B cell (primary cell): ENCODE measurements at regions of chr13 and their contacts with region 1.

Region 1: DNA sequence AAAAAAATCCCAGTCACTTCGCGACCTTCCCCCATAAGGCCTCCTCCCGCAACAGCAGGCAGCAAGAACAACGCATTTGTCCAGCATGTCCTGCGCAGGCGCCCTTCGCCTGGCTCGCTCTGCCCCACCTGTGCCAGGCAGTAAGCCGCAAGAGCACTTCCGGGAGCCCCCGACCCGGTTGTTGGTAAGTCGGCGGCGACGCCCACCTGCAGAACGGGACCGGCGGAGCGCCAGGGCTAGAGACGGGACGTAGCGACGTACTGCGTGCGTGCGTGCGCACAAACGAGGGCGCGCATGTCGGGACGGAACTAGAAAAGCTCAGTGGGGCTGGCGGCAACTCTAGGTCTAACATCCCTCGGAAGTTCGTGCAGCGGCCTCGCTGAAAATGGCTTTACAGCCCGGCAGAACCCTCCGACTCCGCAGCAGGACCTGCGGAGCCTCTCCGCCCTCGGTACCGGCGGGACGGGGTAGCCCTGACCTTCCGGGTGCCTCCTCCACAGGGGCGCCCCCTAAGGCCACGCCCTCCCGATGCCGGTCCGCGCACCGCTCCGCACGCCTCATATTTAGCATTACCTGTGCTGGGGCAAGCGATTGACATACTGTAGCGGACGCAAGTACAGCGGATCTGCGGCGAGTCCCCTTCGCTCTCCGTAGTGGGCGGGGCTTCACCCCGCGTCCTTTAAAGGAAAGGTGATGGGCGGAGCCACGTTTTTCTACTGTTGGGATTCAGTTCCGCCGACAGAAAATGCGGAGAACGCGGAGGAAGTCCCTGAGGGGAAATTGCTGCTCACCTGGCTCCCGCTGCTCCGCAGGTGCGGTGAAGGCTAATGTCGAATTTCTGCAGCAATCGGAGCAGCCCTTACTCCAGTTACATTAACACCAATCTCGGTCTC is at the start of gene MTIF3:
- DNase-seq: peak; percentile 99
- ATAC-seq: peak; percentile 75
- H3K4me3 ChIP-seq: peak within 1 kb of the TSS; percentile 71 to 94 (median 90)
- H3K4me3 Mint-ChIP-seq: peak within 1 kb of the TSS; percentile 94
- H3K27ac ChIP-seq: peak within 1 kb of the TSS; percentile 92 to 98
- H3K27ac Mint-ChIP-seq: peak within 1 kb of the TSS; percentile 98
- H3K4me1 ChIP-seq: peaks cover 55 to 58% of the 10 kb centered on the region in 2 donors
- H3K4me1 Mint-ChIP-seq: peaks cover 57% of the 10 kb centered on the region
- H3K27me3 ChIP-seq: no peaks in the 10 kb centered on the region
- H3K27me3 Mint-ChIP-seq: no peaks in the 10 kb centered on the region
- CTCF ChIP-seq: no peak
- total RNA-seq, gene MTIF3: 78.1 and 86.8 TPM in 2 replicates

Region 2: DNA sequence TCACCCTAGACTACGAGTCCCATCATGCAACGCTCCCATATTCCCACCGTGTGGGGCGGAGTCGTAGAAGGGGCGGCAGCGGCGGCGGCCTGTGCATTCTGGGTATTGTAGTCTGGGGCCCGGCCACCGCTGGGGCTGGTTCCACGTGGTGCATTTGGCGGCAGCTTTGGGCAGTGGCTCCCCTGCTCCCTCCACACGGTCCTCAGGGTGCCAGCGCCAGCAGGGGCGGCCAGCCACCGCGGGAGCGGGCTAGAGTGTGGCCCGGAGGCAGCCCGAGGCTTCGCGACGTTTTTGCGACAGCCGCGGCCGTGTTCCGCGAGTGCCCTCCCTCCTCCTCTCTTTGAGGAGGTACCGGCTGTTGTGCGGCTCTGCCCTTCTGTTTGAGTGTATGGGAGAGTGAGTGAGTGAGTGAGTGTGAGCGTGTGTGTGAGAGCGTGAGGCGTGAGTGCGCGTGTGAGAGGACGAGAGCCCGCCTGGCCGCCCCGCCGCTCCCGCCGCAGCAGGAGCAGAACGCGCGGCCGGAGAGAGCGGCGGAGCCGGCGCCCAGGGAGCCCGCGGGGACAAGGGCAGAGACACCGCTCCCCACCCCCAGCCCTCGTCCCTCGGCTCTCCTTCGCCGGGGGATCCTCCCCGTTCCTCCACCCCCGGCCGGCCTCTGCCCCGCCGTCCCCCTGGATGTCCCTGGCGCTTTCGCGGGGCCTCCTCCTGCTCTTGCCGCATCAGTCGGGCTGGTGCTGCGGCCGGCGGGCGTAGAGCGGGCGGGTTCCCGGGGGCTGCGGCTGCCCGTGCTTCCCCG is 1196.2 kb before region 1 on chr13 and contains the start of gene CDK8:
- CTCF ChIA-PET with region 1: no interaction called
- POLR2A ChIA-PET with region 1: no interaction called
- intact Hi-C with region 1: loop called (anchors 5 kb)
- DNase-seq: peak; percentile 97
- ATAC-seq: peak; percentile 86
- H3K4me3 ChIP-seq: peak within 1 kb of the TSS; percentile 66 to 98 (median 77)
- H3K4me3 Mint-ChIP-seq: peak within 1 kb of the TSS; percentile 83
- H3K27ac ChIP-seq: peak within 1 kb of the TSS; percentile 72 to 80
- H3K27ac Mint-ChIP-seq: peak within 1 kb of the TSS; percentile 81
- H3K4me1 ChIP-seq: peaks cover 14 to 17% of the 10 kb centered on the region in 2 donors
- H3K4me1 Mint-ChIP-seq: peaks cover 29% of the 10 kb centered on the region
- H3K27me3 ChIP-seq: peaks cover 0 to 4% (median 2%) of the 10 kb centered on the region in 4 experiments
- H3K27me3 Mint-ChIP-seq: peaks cover 8% of the 10 kb centered on the region
- CTCF ChIP-seq: no peak
- total RNA-seq, gene CDK8: 13.5 TPM in 2 replicates

Region 3: DNA sequence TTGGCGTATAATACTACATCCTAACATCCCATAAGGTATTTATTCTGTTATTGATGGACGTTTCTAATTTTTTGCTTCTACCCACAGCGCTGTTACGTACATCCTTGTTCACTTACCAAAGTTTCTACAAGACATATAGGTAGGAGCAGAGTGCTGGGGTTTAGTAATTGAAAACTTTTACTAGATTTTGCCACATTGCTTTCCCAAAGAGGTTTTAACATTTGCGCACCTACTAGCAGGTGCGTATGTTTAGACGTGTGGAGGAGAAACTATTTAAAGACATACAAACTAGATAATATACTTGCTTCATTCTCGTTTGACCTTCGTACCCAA is 199.4 kb before region 1 on chr13:
- CTCF ChIA-PET with region 1: no interaction called
- POLR2A ChIA-PET with region 1: no interaction called
- intact Hi-C with region 1: no loop called
- DNase-seq: no peak
- ATAC-seq: no peak
- H3K4me3 ChIP-seq: peak overlapping the region; percentile 85 to 100 (median 95)
- H3K4me3 Mint-ChIP-seq: peak overlapping the region; percentile 95
- H3K27ac ChIP-seq: peak overlapping the region; percentile 93 to 96
- H3K27ac Mint-ChIP-seq: peak overlapping the region; percentile 100
- H3K4me1 ChIP-seq: peaks cover 16 to 30% of the 10 kb centered on the region in 2 donors
- H3K4me1 Mint-ChIP-seq: peaks cover 48% of the 10 kb centered on the region
- H3K27me3 ChIP-seq: no peaks in the 10 kb centered on the region
- H3K27me3 Mint-ChIP-seq: no peaks in the 10 kb centered on the region
- CTCF ChIP-seq: no peak

Region 4: GRCh38 chr13:27424246-27425157 is 25.7 kb before region 1 on chr13 and contains the start of gene GTF3A:
- CTCF ChIA-PET with region 1: interaction called, 75 read pairs
- POLR2A ChIA-PET with region 1: interaction called, 106 read pairs
- intact Hi-C with region 1: loop called (anchors 1 kb)
- DNase-seq: peak; percentile 96
- ATAC-seq: peak; percentile 66
- H3K4me3 ChIP-seq: peak within 1 kb of the TSS; percentile 74 to 97 (median 83)
- H3K4me3 Mint-ChIP-seq: peak within 1 kb of the TSS; percentile 82
- H3K27ac ChIP-seq: peak within 1 kb of the TSS; percentile 78 to 88
- H3K27ac Mint-ChIP-seq: peak within 1 kb of the TSS; percentile 88
- H3K4me1 ChIP-seq: peaks cover 25 to 36% of the 10 kb centered on the region in 2 donors
- H3K4me1 Mint-ChIP-seq: peaks cover 39% of the 10 kb centered on the region
- H3K27me3 ChIP-seq: no peaks in the 10 kb centered on the region
- H3K27me3 Mint-ChIP-seq: no peaks in the 10 kb centered on the region
- CTCF ChIP-seq: no peak
- total RNA-seq, gene GTF3A: 114 and 122 TPM in 2 replicates

Region 5: GRCh38 chr13:27533155-27533643 is 83.0 kb after region 1 on chr13:
- CTCF ChIA-PET with region 1: interaction called, 13 read pairs
- POLR2A ChIA-PET with region 1: no interaction called
- intact Hi-C with region 1: no loop called
- DNase-seq: peak; percentile 57
- ATAC-seq: peak; percentile 70
- H3K4me3 ChIP-seq: peak overlapping the region in 3 of 5 experiments; percentile 16 to 44 (median 17)
- H3K4me3 Mint-ChIP-seq: peak overlapping the region; percentile 69
- H3K27ac ChIP-seq: no peak overlapping the region
- H3K27ac Mint-ChIP-seq: no peak overlapping the region
- H3K4me1 ChIP-seq: peaks cover 9 to 15% of the 10 kb centered on the region in 2 donors
- H3K4me1 Mint-ChIP-seq: peaks cover 26% of the 10 kb centered on the region
- H3K27me3 ChIP-seq: no peaks in the 10 kb centered on the region
- H3K27me3 Mint-ChIP-seq: no peaks in the 10 kb centered on the region
- CTCF ChIP-seq: peak; percentile 73

Region 6: GRCh38 chr13:28047757-28048388 is 597.7 kb after region 1 on chr13:
- CTCF ChIA-PET with region 1: no interaction called
- POLR2A ChIA-PET with region 1: no interaction called
- intact Hi-C with region 1: loop called (anchors 10 kb)
- DNase-seq: peak; percentile 84
- ATAC-seq: peak; percentile 92
- H3K4me3 ChIP-seq: peak overlapping the region in 3 of 5 experiments; percentile 22 to 33 (median 23)
- H3K4me3 Mint-ChIP-seq: peak overlapping the region; percentile 76
- H3K27ac ChIP-seq: peak overlapping the region; percentile 89 to 97
- H3K27ac Mint-ChIP-seq: peak overlapping the region; percentile 95
- H3K4me1 ChIP-seq: peaks cover 57 to 67% of the 10 kb centered on the region in 2 donors
- H3K4me1 Mint-ChIP-seq: peaks cover 56% of the 10 kb centered on the region
- H3K27me3 ChIP-seq: no peaks in the 10 kb centered on the region
- H3K27me3 Mint-ChIP-seq: no peaks in the 10 kb centered on the region
- CTCF ChIP-seq: no peak

Region 7: DNA sequence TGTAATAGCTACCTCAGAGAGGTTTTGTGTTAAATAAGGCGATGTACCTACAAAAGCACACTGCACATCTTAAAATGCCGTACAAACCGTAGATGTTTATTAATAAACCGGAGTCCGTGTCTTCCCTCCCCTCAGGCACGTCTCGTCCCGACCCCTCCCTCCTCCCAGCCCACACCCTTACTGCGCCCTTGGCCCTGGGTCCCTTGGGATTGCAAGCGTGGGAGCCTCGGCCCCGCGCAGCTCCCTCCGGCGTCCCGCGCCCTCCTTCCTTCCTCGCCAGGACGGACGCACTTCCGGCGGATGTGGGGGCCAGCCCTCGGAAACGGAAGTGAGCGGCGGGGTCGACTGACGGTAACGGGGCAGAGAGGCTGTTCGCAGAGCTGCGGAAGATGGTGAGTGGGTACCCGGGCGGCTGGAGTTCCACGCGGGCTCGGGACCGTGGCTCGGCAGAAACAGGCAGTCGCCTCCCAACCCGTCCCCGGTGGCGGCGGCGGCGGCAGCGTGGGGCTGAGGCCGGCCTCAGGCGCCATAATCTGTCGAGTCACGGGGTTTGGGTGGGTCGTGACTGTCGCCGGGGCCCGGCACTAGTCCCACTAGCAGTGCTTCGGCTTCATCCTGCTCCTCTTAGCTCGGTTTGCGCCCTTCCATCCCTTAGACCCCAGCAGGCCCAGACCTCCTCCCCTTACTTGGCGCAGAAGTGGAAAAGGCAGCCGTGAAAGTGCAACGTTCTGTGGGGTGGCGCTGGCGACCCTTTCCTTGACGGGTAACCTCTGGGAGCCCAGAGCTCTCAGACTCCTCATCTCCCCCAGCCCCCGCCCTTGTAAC is 1208.8 kb after region 1 on chr13 and contains the start of gene POMP:
- CTCF ChIA-PET with region 1: no interaction called
- POLR2A ChIA-PET with region 1: no interaction called
- intact Hi-C with region 1: loop called (anchors 2 kb)
- DNase-seq: peak; percentile 97
- ATAC-seq: peak; percentile 92
- H3K4me3 ChIP-seq: peak within 1 kb of the TSS; percentile 78 to 97 (median 89)
- H3K4me3 Mint-ChIP-seq: peak within 1 kb of the TSS; percentile 97
- H3K27ac ChIP-seq: peak within 1 kb of the TSS; percentile 86 to 93
- H3K27ac Mint-ChIP-seq: peak within 1 kb of the TSS; percentile 98
- H3K4me1 ChIP-seq: peaks cover 43 to 44% of the 10 kb centered on the region in 2 donors
- H3K4me1 Mint-ChIP-seq: peaks cover 61% of the 10 kb centered on the region
- H3K27me3 ChIP-seq: no peaks in the 10 kb centered on the region
- H3K27me3 Mint-ChIP-seq: no peaks in the 10 kb centered on the region
- CTCF ChIP-seq: no peak
- total RNA-seq, gene POMP: 18.9 and 28.7 TPM in 2 replicates